Activated CD4-positive, alpha-beta memory T cell treated with anti-CD3 and anti-CD28 coated beads for 36 hours (primary cell): ENCODE measurements at regions of chr5 and their contacts with region 1.

Region 1: DNA sequence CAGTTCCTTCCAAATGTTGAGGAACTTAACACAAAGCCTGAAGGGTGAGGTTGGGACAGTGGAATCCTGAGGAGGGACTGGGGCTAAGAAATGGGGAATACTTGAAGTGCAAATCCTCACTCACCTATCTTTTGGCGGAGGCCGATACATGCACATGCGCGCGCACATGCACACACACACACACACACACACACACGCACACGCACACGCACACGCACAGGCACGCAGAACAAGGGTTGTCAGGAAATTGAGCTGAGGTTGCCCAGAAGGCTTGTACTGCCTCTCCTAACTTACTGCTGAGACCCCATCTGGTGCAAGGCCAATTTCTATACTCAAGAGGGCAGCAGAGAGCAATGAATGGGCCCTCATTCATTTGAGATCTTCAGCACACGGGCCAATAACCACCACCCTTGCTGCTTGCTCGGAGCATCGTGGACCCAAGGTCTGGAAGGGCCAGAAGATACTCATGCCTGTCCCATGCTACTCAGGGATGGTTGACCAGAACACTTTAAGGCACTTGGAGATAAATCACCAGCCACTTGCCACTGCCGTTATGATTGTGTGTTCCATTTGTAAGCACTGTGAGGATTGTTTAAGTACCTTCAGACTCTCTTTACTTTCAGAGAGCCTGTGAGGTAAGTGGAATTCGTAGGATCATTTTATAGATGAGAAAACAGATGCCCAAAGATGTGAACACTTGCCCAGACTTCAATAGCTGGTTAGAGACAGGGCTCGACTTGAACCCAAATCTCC is 21.5 kb downstream of the BTF3 start:
- DNase-seq: peak; percentile 78
- H3K4me3 Mint-ChIP-seq: no peak overlapping the region
- H3K27ac Mint-ChIP-seq: peak overlapping the region; percentile 28
- H3K4me1 Mint-ChIP-seq: peaks cover 7% of the 10 kb centered on the region
- H3K27me3 Mint-ChIP-seq: no peaks in the 10 kb centered on the region

Region 2: GRCh38 chr5:73485715-73486114 is 34.0 kb before region 1 on chr5:
- CTCF ChIA-PET with region 1: no interaction called
- POLR2A ChIA-PET with region 1: no interaction called
- intact Hi-C with region 1: no loop called
- DNase-seq: no peak
- H3K4me3 Mint-ChIP-seq: no peak overlapping the region
- H3K27ac Mint-ChIP-seq: no peak overlapping the region
- H3K4me1 Mint-ChIP-seq: no peaks in the 10 kb centered on the region
- H3K27me3 Mint-ChIP-seq: peaks cover 17% of the 10 kb centered on the region

Region 3: GRCh38 chr5:73534971-73535370 is 15.3 kb after region 1 on chr5:
- CTCF ChIA-PET with region 1: interaction called, 142 read pairs
- POLR2A ChIA-PET with region 1: no interaction called
- intact Hi-C with region 1: loop called (anchors 1 kb)
- DNase-seq: no peak
- H3K4me3 Mint-ChIP-seq: no peak overlapping the region
- H3K27ac Mint-ChIP-seq: no peak overlapping the region
- H3K4me1 Mint-ChIP-seq: no peaks in the 10 kb centered on the region
- H3K27me3 Mint-ChIP-seq: peaks cover 17% of the 10 kb centered on the region

Region 4: DNA sequence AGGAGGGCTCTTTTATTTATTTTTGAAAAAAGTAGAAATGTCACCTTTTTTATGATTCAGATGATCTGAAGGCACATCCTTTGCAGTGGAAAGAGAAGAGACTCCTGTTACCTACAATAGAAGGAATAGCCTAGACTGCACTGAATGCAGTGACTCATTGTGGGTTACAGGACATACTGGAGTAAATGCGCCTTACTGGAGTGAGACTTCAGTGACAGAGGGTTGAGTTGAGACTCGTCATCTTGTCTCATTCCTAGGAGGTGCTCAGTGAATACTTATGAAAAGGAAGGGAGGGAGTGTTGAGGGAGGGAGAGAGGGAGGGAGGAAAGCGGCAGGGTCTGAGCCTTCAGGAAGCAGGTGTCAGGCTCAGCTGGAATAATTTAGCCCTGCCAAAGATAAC is 20.5 kb after region 1 on chr5:
- CTCF ChIA-PET with region 1: interaction called, 142 read pairs
- POLR2A ChIA-PET with region 1: no interaction called
- intact Hi-C with region 1: loop called (anchors 1 kb)
- DNase-seq: no peak
- H3K4me3 Mint-ChIP-seq: no peak overlapping the region
- H3K27ac Mint-ChIP-seq: no peak overlapping the region
- H3K4me1 Mint-ChIP-seq: no peaks in the 10 kb centered on the region
- H3K27me3 Mint-ChIP-seq: peaks cover 12% of the 10 kb centered on the region

Region 5: GRCh38 chr5:73596705-73597328 is 77.1 kb after region 1 on chr5:
- CTCF ChIA-PET with region 1: no interaction called
- POLR2A ChIA-PET with region 1: no interaction called
- intact Hi-C with region 1: loop called (anchors 1 kb)
- DNase-seq: no peak
- H3K4me3 Mint-ChIP-seq: no peak overlapping the region
- H3K27ac Mint-ChIP-seq: no peak overlapping the region
- H3K4me1 Mint-ChIP-seq: no peaks in the 10 kb centered on the region
- H3K27me3 Mint-ChIP-seq: peaks cover 7% of the 10 kb centered on the region

Region 6: GRCh38 chr5:73948720-73949119 is 429.0 kb after region 1 on chr5:
- CTCF ChIA-PET with region 1: no interaction called
- POLR2A ChIA-PET with region 1: no interaction called
- intact Hi-C with region 1: no loop called
- DNase-seq: no peak
- H3K4me3 Mint-ChIP-seq: no peak overlapping the region
- H3K27ac Mint-ChIP-seq: no peak overlapping the region
- H3K4me1 Mint-ChIP-seq: no peaks in the 10 kb centered on the region
- H3K27me3 Mint-ChIP-seq: peaks cover 12% of the 10 kb centered on the region